ENCODE measurements at regions of chr16 and their contacts with region 1.

Region 1: GRCh38 chr16:56450986-56451752 is at the starts of genes NUDT21 and OGFOD1:
- DNase-seq: peak; percentile 98
- H3K4me3 ChIP-seq: peak within 1 kb of the TSS; percentile 62
- H3K4me3 Mint-ChIP-seq: peak within 1 kb of the TSS; percentile 81
- H3K27ac Mint-ChIP-seq: peak within 1 kb of the TSS; percentile 90
- H3K4me1 ChIP-seq: peaks cover 32% of the 10 kb centered on the region
- H3K4me1 Mint-ChIP-seq: peaks cover 29% of the 10 kb centered on the region
- H3K27me3 ChIP-seq: no peaks in the 10 kb centered on the region
- H3K27me3 Mint-ChIP-seq: no peaks in the 10 kb centered on the region
- CTCF ChIP-seq: no peak
- total RNA-seq, gene NUDT21: 305 and 311 TPM in 2 replicates
- total RNA-seq, gene OGFOD1: 75.5 and 79.0 TPM in 2 replicates

Region 2: DNA sequence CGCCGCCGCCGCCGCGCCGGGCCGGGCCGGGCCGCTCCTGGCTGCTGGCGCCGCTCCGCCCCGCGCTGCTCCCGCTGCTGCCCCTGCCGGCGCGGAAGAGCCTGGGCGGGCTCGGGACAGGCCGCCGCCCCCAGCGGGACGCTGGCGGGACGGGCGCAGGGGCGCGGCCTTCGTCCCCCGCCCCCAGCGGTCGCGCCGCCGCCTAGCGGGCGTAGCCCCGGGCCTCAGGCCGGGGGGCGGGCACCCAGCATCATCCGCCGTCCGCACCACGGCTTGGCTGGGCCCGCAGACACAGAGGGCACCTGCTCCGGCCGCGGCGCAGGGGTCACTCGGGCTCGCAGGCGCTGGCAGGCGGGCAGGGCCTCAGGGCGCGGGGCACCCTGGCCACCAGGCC is 25.7 kb before region 1 on chr16 and contains the start of gene AMFR:
- CTCF ChIA-PET with region 1: no interaction called
- POLR2A ChIA-PET with region 1: interaction called, 6 read pairs
- intact Hi-C with region 1: loop called (anchors 1 kb)
- DNase-seq: peak; percentile 65 to 91
- H3K4me3 ChIP-seq: peak within 1 kb of the TSS; percentile 81
- H3K4me3 Mint-ChIP-seq: peak within 1 kb of the TSS; percentile 90
- H3K27ac Mint-ChIP-seq: peak within 1 kb of the TSS; percentile 68
- H3K4me1 ChIP-seq: peaks cover 25% of the 10 kb centered on the region
- H3K4me1 Mint-ChIP-seq: peaks cover 27% of the 10 kb centered on the region
- H3K27me3 ChIP-seq: no peaks in the 10 kb centered on the region
- H3K27me3 Mint-ChIP-seq: no peaks in the 10 kb centered on the region
- CTCF ChIP-seq: peak; percentile 25 to 30
- total RNA-seq, gene AMFR: 101 and 106 TPM in 2 replicates

Region 3: DNA sequence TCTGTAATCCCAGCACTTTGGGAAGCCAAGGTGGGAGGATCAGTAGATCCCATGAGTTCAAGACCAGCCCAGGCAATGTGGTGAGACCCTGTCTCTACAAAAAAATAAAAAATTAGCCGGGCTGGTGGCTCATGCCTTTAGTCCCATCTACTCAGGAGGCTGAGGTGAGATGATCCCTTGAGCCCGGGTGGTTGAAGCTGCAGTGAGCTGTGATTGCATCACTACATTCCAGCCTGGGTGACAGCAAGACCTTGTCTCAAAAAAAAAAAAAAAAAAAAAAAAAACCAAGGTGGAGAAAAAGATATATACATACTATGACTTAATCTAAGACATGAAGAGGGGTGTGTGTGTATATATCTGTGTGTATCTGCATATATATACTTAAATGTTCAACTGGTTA is 42.0 kb after region 1 on chr16:
- CTCF ChIA-PET with region 1: no interaction called
- POLR2A ChIA-PET with region 1: no interaction called
- intact Hi-C with region 1: loop called (anchors 1 kb)
- DNase-seq: peak; percentile 44 to 47
- H3K4me3 ChIP-seq: no peak overlapping the region
- H3K4me3 Mint-ChIP-seq: no peak overlapping the region
- H3K27ac Mint-ChIP-seq: no peak overlapping the region
- H3K4me1 ChIP-seq: no peaks in the 10 kb centered on the region
- H3K4me1 Mint-ChIP-seq: no peaks in the 10 kb centered on the region
- H3K27me3 ChIP-seq: no peaks in the 10 kb centered on the region
- H3K27me3 Mint-ChIP-seq: no peaks in the 10 kb centered on the region
- CTCF ChIP-seq: no peak